ENCODE measurements at regions of chr3 and their contacts with region 1.

Region 1: DNA sequence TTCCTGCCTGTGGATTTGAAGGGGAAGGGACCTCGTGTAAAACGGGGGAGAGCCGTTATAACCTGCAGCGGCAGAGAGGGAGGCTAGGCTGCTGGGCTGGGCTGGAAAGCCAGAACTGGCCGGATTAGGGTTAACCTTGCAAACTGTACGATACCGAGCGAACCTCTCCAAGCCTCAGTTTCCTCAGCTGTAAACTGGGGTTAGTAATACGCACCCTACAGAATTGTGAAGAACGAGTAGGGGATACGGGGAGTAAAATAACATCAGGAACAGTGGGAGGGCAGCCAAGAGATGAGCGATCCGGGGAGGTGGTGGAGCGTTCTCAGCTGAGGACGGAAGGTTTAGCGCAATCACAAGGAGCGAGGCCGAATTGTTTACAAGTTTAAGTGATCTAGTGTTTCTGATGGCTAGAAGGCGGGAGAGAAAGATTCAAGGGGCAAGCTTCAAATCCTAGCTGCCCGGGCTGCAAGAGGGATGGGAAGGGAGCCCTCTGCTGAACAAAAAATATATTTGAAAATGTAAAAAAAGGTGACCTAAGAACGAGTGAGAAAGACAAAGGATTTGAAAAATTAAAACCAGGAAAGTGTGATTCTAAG is 768 bp upstream of the SEMA5B start:
- DNase-seq: peak; percentile 28
- H3K4me3 Mint-ChIP-seq: peak overlapping the region; percentile 36
- H3K27ac Mint-ChIP-seq: no peak overlapping the region
- H3K4me1 Mint-ChIP-seq: peaks cover 12% of the 10 kb centered on the region
- H3K27me3 Mint-ChIP-seq: peaks cover 53% of the 10 kb centered on the region

Region 2: GRCh38 chr3:122383771-122384697 is 644.3 kb before region 1 on chr3 and contains the start of gene FAM162A:
- CTCF ChIA-PET with region 1: no interaction called
- POLR2A ChIA-PET with region 1: no interaction called
- intact Hi-C with region 1: loop called (anchors 10 kb)
- DNase-seq: peak; percentile 95
- H3K4me3 Mint-ChIP-seq: peak within 1 kb of the TSS; percentile 94
- H3K27ac Mint-ChIP-seq: peak within 1 kb of the TSS; percentile 92
- H3K4me1 Mint-ChIP-seq: peaks cover 60% of the 10 kb centered on the region
- H3K27me3 Mint-ChIP-seq: no peaks in the 10 kb centered on the region
- total RNA-seq, gene FAM162A: 99.1 to 102 TPM

Region 3: GRCh38 chr3:122392868-122393844 is 635.2 kb before region 1 on chr3:
- CTCF ChIA-PET with region 1: interaction called, 11 read pairs
- POLR2A ChIA-PET with region 1: no interaction called
- intact Hi-C with region 1: loop called (anchors 10 kb)
- DNase-seq: peak; percentile 20
- H3K4me3 Mint-ChIP-seq: no peak overlapping the region
- H3K27ac Mint-ChIP-seq: no peak overlapping the region
- H3K4me1 Mint-ChIP-seq: peaks cover 32% of the 10 kb centered on the region
- H3K27me3 Mint-ChIP-seq: no peaks in the 10 kb centered on the region

Region 4: GRCh38 chr3:122754929-122755328 is 273.4 kb before region 1 on chr3:
- CTCF ChIA-PET with region 1: interaction called, 7 read pairs
- POLR2A ChIA-PET with region 1: no interaction called
- intact Hi-C with region 1: loop called (anchors 1 kb)
- DNase-seq: no peak
- H3K4me3 Mint-ChIP-seq: no peak overlapping the region
- H3K27ac Mint-ChIP-seq: no peak overlapping the region
- H3K4me1 Mint-ChIP-seq: no peaks in the 10 kb centered on the region
- H3K27me3 Mint-ChIP-seq: no peaks in the 10 kb centered on the region

Region 5: GRCh38 chr3:122858373-122858772 is 170.0 kb before region 1 on chr3:
- CTCF ChIA-PET with region 1: interaction called, 4 read pairs
- POLR2A ChIA-PET with region 1: no interaction called
- intact Hi-C with region 1: loop called (anchors 5 kb)
- DNase-seq: no peak
- H3K4me3 Mint-ChIP-seq: no peak overlapping the region
- H3K27ac Mint-ChIP-seq: no peak overlapping the region
- H3K4me1 Mint-ChIP-seq: peaks cover 2% of the 10 kb centered on the region
- H3K27me3 Mint-ChIP-seq: no peaks in the 10 kb centered on the region

Region 6: GRCh38 chr3:122942937-122943827 is 85.1 kb before region 1 on chr3:
- CTCF ChIA-PET with region 1: interaction called, 27 read pairs
- POLR2A ChIA-PET with region 1: no interaction called
- intact Hi-C with region 1: loop called (anchors 1 kb)
- DNase-seq: peak; percentile 54
- H3K4me3 Mint-ChIP-seq: no peak overlapping the region
- H3K27ac Mint-ChIP-seq: no peak overlapping the region
- H3K4me1 Mint-ChIP-seq: peaks cover 5% of the 10 kb centered on the region
- H3K27me3 Mint-ChIP-seq: no peaks in the 10 kb centered on the region

Region 7: GRCh38 chr3:122957707-122958689 is 70.3 kb before region 1 on chr3:
- CTCF ChIA-PET with region 1: no interaction called
- POLR2A ChIA-PET with region 1: no interaction called
- intact Hi-C with region 1: no loop called
- DNase-seq: no peak
- H3K4me3 Mint-ChIP-seq: no peak overlapping the region
- H3K27ac Mint-ChIP-seq: no peak overlapping the region
- H3K4me1 Mint-ChIP-seq: no peaks in the 10 kb centered on the region
- H3K27me3 Mint-ChIP-seq: peaks cover 2% of the 10 kb centered on the region

Region 8: DNA sequence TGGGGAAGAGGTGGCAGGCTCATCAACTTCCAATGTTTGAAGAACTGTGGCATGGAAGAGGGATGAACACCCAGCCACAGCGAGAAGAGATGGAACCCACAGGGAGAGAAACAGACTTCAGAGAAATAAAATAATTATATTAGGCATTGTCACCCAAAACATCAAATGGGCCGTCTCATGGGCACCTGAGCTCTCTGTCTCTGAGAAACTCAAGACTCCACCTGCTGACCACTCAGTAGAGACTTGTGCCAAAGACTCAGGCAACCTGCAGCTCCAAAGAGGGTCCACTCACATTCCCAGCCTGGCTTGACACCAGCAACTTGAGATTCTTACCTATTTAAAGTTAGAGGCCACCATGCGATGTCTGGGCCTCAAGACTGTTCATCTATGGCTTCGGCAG is 12.8 kb before region 1 on chr3:
- CTCF ChIA-PET with region 1: interaction called, 21 read pairs
- POLR2A ChIA-PET with region 1: no interaction called
- intact Hi-C with region 1: no loop called
- DNase-seq: no peak
- H3K4me3 Mint-ChIP-seq: no peak overlapping the region
- H3K27ac Mint-ChIP-seq: no peak overlapping the region
- H3K4me1 Mint-ChIP-seq: no peaks in the 10 kb centered on the region
- H3K27me3 Mint-ChIP-seq: peaks cover 16% of the 10 kb centered on the region

Measured in activated CD4-positive, alpha-beta memory T cell treated with anti-CD3 and anti-CD28 coated beads for 36 hours (primary cell).